ENCODE measurements at regions of chr6 and their contacts with region 1.

Region 1: GRCh38 chr6:36759148-36759759 is 61.6 kb downstream of the RAB44 start:
- DNase-seq: peak; percentile 83
- ATAC-seq: peak; percentile 93
- H3K4me3 ChIP-seq: no peak overlapping the region
- H3K27ac ChIP-seq: no peak overlapping the region
- H3K4me1 ChIP-seq: peaks cover 25% of the 10 kb centered on the region
- H3K27me3 ChIP-seq: no peaks in the 10 kb centered on the region
- CTCF ChIP-seq: peak; percentile 98

Region 2: DNA sequence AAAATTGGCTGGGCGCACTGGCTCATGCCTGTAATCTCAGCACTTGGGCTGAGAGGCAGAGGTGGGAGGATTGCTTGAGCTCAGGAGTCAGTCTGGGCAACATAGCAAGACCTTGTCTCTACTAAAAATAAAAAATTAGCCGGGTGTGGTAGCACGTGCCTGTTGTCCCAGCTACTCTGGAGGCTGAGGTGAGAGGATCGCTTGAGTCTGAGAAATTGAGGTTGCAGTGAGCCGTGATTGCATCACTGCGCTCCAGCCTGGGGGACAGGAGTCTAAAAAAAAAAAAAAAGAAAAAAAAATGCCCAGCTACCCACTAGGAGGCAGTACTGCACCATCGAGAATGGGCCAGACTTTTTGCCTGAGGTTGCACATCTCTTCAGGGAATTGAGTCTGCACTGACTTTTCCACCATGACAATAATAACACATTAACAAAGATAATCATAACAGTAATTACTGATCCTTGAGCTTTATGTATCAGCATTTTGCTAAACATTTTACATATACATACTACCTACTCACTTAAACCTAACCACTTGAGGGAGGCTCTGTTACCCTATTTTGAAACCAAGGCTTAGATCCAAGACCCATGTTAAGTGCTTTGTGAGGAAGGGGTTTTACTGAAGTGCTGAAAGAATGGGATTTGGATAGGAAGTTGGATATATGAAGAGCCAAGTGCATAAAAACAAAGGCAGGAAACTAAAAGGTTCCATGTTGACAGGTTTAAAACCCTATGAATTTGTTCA is 144.1 kb before region 1 on chr6:
- CTCF ChIA-PET with region 1: interaction called, 12 read pairs
- POLR2A ChIA-PET with region 1: no interaction called
- intact Hi-C with region 1: loop called (anchors 2 kb)
- DNase-seq: peak; percentile 70
- ATAC-seq: no peak
- H3K4me3 ChIP-seq: no peak overlapping the region
- H3K27ac ChIP-seq: no peak overlapping the region
- H3K4me1 ChIP-seq: peaks cover 17% of the 10 kb centered on the region
- H3K27me3 ChIP-seq: no peaks in the 10 kb centered on the region
- CTCF ChIP-seq: peak; percentile 87

Region 3: GRCh38 chr6:36623547-36624459 is 135.5 kb before region 1 on chr6:
- CTCF ChIA-PET with region 1: no interaction called
- POLR2A ChIA-PET with region 1: no interaction called
- intact Hi-C with region 1: loop called (anchors 1 kb)
- DNase-seq: peak; percentile 88
- ATAC-seq: peak; percentile 72
- H3K4me3 ChIP-seq: no peak overlapping the region
- H3K27ac ChIP-seq: no peak overlapping the region
- H3K4me1 ChIP-seq: peaks cover 23% of the 10 kb centered on the region
- H3K27me3 ChIP-seq: no peaks in the 10 kb centered on the region
- CTCF ChIP-seq: peak; percentile 92

Region 4: GRCh38 chr6:36678518-36679027 is 80.7 kb before region 1 on chr6 and contains the start of gene CDKN1A:
- CTCF ChIA-PET with region 1: no interaction called
- POLR2A ChIA-PET with region 1: interaction called, 4 read pairs
- intact Hi-C with region 1: loop called (anchors 1 kb)
- DNase-seq: peak; percentile 92
- ATAC-seq: peak; percentile 74
- H3K4me3 ChIP-seq: peak within 1 kb of the TSS; percentile 76
- H3K27ac ChIP-seq: peak within 1 kb of the TSS; percentile 49
- H3K4me1 ChIP-seq: peaks cover 34% of the 10 kb centered on the region
- H3K27me3 ChIP-seq: no peaks in the 10 kb centered on the region
- CTCF ChIP-seq: no peak
- total RNA-seq, gene CDKN1A: 79.5 and 91.5 TPM in 2 replicates

Measured in PC-3 (cell line).